Calu3 (cell line): ENCODE measurements at regions of chr1 and their contacts with region 1.

Region 1: DNA sequence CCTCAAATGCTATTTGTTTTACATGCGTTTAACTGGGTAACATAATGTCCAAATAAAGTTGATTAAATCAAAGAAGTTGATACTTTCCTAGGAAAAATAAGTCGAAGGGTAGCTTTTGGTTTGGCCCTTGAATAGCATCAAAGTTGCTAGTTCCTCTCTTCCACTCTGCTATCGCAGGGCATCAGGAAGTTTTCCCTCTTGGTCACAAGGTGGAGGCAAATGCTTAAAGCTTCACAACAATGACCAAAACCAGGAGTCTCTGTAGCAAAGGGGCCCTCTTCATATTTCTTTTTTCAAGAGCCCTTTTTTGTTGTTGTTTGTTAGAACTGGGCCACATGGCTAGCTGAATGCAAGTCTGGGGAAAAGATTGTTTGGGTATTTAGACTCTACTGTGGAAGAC is 668.4 kb downstream of the KCNT2 start:
- DNase-seq: no peak
- H3K4me3 Mint-ChIP-seq: no peak overlapping the region
- H3K27ac Mint-ChIP-seq: no peak overlapping the region
- H3K4me1 Mint-ChIP-seq: no peaks in the 10 kb centered on the region
- H3K27me3 Mint-ChIP-seq: no peaks in the 10 kb centered on the region
- CTCF ChIP-seq: peak; percentile 22

Region 2: DNA sequence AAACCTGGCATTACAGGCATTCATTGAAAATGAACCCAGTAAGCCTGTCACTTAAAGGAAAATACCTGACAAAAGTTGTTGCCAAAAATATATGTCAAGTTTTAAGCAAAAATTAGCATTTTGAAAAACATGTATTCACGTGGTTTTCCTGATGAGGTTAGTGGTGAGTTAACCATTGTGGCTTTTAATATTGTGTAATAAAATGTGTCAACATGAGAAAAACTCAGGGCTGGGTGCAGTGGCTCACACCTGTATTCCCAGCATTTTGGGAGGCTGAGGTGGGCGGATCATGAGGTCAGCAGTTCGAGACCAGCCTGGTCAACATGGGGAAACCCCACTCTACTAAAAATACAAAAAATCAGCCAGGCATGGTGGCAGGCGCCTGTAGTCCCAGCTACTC is 63.1 kb before region 1 on chr1:
- CTCF ChIA-PET with region 1: no interaction called
- intact Hi-C with region 1: no loop called
- DNase-seq: no peak
- H3K4me3 Mint-ChIP-seq: no peak overlapping the region
- H3K27ac Mint-ChIP-seq: no peak overlapping the region
- H3K4me1 Mint-ChIP-seq: no peaks in the 10 kb centered on the region
- H3K27me3 Mint-ChIP-seq: no peaks in the 10 kb centered on the region
- CTCF ChIP-seq: no peak

Region 3: GRCh38 chr1:196309386-196309785 is 369.5 kb after region 1 on chr1:
- CTCF ChIA-PET with region 1: no interaction called
- intact Hi-C with region 1: loop called (anchors 5 kb)
- DNase-seq: no peak
- H3K4me3 Mint-ChIP-seq: no peak overlapping the region
- H3K27ac Mint-ChIP-seq: no peak overlapping the region
- H3K4me1 Mint-ChIP-seq: no peaks in the 10 kb centered on the region
- H3K27me3 Mint-ChIP-seq: no peaks in the 10 kb centered on the region
- CTCF ChIP-seq: no peak